Testis (tissue), 5 donors: ENCODE measurements at regions of chr10 and their contacts with region 1.

Region 1: GRCh38 chr10:116796910-116797513 is 52.3 kb upstream of the ENO4 start:
- DNase-seq: peak; percentile 82
- H3K4me3 ChIP-seq: no peak overlapping the region
- H3K27ac ChIP-seq: no peak overlapping the region
- H3K4me1 ChIP-seq: no peaks in the 10 kb centered on the region
- H3K27me3 ChIP-seq: no peaks in the 10 kb centered on the region
- CTCF ChIP-seq: peak; percentile 86 to 87 (median 87)
- POLR2A ChIP-seq: no peak

Region 2: GRCh38 chr10:116849248-116850057 is 52.4 kb after region 1 on chr10 and contains the start of gene ENO4:
- intact Hi-C with region 1: no loop called
- DNase-seq: peak; percentile 91
- H3K4me3 ChIP-seq: peak within 1 kb of the TSS; percentile 73 to 74
- H3K27ac ChIP-seq: peak within 1 kb of the TSS; percentile 48 to 60
- H3K4me1 ChIP-seq: peaks cover 12% of the 10 kb centered on the region
- H3K27me3 ChIP-seq: no peaks in the 10 kb centered on the region
- CTCF ChIP-seq: no peak
- POLR2A ChIP-seq: no peak
- total RNA-seq, gene ENO4: 1.8 to 5.6 TPM

Region 3: GRCh38 chr10:116985611-116986010 is 188.6 kb after region 1 on chr10:
- intact Hi-C with region 1: no loop called
- DNase-seq: no peak
- H3K4me3 ChIP-seq: no peak overlapping the region
- H3K27ac ChIP-seq: no peak overlapping the region
- H3K4me1 ChIP-seq: no peaks in the 10 kb centered on the region
- H3K27me3 ChIP-seq: no peaks in the 10 kb centered on the region
- CTCF ChIP-seq: no peak
- POLR2A ChIP-seq: no peak

Region 4: GRCh38 chr10:117174439-117175214 is 377.6 kb after region 1 on chr10:
- intact Hi-C with region 1: loop called (anchors 5 kb)
- DNase-seq: peak; percentile 87
- H3K4me3 ChIP-seq: peak overlapping the region; percentile 5 to 41
- H3K27ac ChIP-seq: no peak overlapping the region
- H3K4me1 ChIP-seq: peaks cover 7% of the 10 kb centered on the region
- H3K27me3 ChIP-seq: no peaks in the 10 kb centered on the region
- CTCF ChIP-seq: peak; percentile 71 to 77 (median 74)
- POLR2A ChIP-seq: no peak